ENCODE measurements at regions of chr10 and their contacts with region 1.

Region 1: DNA sequence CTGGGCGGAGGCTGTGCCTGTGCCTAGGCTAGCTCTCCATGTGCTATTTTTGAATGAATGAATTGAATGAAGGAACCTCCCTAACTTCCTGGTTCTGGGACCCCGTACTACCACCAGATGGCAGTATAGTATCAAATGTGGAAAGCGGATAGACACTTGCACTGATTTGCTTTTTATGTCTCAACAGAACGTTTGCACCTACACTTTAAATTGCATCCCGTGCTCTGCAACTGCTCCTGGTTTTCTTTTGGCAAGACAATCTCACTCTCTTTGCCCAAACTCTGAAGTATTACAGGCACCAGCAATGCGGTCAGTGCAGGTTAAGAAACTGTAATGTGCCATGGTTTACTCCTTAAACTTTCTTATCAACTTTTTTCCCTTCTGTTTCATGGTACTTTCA is 6.5 kb downstream of the FZD8 start:
- DNase-seq: peak; percentile 72
- H3K4me3 ChIP-seq: no peak overlapping the region
- H3K27ac ChIP-seq: no peak overlapping the region
- H3K4me1 ChIP-seq: peaks cover 4% of the 10 kb centered on the region
- H3K27me3 ChIP-seq: no peaks in the 10 kb centered on the region

Region 2: DNA sequence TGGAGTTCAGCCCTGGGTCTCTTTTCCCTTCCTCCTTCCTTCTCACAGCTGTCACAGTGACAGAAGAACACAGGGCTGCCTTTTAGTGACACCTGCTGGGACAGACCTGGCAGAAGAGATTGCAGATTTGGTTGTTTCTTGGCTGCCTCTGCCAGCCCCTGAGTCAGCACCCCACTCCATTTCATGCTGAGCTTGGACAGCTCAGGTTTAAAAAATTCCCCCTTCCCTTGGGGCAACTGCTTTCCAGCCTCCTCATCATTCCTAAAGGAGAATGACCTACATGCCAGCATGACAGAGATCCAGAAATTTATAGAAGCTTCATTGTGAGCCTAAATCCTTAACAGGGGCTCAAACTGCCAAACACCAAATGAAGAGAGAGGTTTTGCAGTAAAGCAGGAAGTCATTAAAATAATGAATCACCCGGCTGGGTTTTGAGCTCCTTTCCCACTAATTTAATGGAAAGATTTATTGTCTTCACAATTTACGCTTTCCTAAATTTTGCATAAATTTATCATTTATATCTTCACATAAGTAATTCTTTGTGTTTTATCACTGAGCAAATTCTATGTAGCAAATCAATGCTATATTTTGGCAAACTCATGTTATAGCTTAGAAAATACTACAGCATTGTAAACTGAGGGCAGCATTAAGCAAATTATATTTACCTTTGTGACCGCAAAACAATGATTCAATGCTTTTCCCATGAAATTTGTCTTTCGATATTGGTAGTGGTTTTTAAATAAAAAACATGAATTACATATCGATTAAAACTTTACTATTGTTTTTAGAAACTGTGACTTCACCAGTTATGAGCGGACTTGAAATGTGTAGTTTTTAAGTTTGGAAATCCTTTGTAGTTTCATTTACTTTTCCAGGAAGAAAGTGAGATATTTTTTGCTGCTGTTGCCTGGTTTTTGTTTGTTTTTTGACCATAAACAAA is 1090.3 kb after region 1 on chr10:
- in situ Hi-C with region 1: loop called (anchors 10 kb)
- DNase-seq: peak; percentile 91
- H3K4me3 ChIP-seq: no peak overlapping the region
- H3K27ac ChIP-seq: peak overlapping the region; percentile 34
- H3K4me1 ChIP-seq: peaks cover 29% of the 10 kb centered on the region
- H3K27me3 ChIP-seq: no peaks in the 10 kb centered on the region

Region 3: GRCh38 chr10:36780158-36780557 is 1144.6 kb after region 1 on chr10:
- in situ Hi-C with region 1: loop called (anchors 5 kb)
- DNase-seq: no peak
- H3K4me3 ChIP-seq: no peak overlapping the region
- H3K27ac ChIP-seq: no peak overlapping the region
- H3K4me1 ChIP-seq: peaks cover 8% of the 10 kb centered on the region; the same call in 1 of the 2 replicates
- H3K27me3 ChIP-seq: no peaks in the 10 kb centered on the region

Measured in GM23248 (cell line).